Activated CD4-positive, alpha-beta T cell treated with anti-CD3 and anti-CD28 coated beads for 36 hours (primary cell): ENCODE measurements at regions of chr22 and their contacts with region 1.

Region 1: DNA sequence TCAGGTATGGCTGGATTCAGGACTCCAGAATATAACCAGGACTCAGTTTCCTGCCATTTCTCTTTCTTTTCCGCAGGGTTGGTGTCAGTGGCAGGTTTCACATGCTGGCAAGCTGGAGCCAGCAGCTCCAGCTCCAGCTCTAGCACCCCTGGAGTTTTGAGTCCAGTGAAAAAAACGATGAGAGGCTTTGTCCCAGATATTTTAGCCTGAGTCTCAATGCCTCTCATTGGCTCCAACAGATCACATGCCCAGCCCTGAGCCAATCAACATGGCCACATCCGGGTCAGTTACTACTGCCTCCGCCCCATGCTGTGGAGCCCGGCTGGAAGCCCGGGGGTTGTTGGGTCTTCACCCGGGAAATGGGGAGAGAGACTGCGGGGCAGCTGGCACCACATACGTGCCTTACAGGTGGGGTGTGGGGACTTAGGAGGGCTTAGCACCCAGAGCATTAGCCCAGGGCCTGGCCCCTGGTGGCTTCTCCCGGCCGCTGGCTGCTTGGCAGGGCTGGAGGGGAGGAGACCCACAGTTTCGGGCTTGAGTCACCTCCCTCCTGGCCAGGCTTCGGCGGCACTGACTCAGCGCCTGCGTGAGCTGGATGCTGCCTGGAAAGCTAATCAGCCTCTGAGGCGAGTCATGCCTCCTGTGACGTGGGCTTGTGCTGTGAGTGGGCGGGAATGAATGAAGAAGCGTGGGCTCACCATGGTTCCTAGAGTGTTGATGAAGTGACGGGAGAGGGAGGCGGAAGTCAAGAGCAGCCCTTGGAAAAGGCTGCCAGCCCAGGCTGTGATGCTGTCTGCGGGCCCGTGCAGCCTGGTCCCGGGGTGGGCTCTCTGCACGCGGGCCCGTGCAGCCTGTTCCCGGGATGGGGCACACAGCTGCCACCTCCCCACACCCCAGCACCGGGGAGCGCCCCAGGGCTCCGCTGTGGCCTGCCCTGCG is 15.3 kb upstream of the MRTFA start:
- DNase-seq: peak; percentile 97
- ATAC-seq: peak; percentile 99
- H3K4me3 Mint-ChIP-seq: peak overlapping the region; percentile 64
- H3K27ac Mint-ChIP-seq: peak overlapping the region; percentile 88
- H3K4me1 Mint-ChIP-seq: peaks cover 21% of the 10 kb centered on the region
- H3K27me3 Mint-ChIP-seq: no peaks in the 10 kb centered on the region

Region 2: DNA sequence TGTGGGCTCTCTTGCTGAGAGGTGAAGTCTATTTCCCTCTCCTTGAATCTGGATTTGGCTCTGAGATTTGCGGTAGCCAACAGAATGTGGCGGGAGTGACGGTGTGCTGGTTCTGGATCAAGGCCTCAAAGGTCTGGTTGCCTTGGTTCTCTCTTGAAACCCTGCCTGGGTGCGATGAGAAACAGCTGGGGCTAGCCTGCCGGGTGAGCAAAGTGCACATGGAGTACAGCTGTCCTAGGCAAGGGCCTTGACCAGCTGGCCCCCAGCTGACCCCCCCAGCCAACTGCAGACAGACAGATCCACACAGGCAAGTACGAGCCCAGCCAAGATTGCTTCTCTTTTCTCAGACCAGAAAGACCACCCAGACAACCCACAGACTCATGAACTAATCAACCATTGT is 1906.9 kb before region 1 on chr22:
- CTCF ChIA-PET with region 1: no interaction called
- POLR2A ChIA-PET with region 1: no interaction called
- intact Hi-C with region 1: no loop called
- DNase-seq: no peak
- ATAC-seq: no peak
- H3K4me3 Mint-ChIP-seq: no peak overlapping the region
- H3K27ac Mint-ChIP-seq: peak overlapping the region; percentile 59
- H3K4me1 Mint-ChIP-seq: peaks cover 17% of the 10 kb centered on the region
- H3K27me3 Mint-ChIP-seq: no peaks in the 10 kb centered on the region

Region 3: DNA sequence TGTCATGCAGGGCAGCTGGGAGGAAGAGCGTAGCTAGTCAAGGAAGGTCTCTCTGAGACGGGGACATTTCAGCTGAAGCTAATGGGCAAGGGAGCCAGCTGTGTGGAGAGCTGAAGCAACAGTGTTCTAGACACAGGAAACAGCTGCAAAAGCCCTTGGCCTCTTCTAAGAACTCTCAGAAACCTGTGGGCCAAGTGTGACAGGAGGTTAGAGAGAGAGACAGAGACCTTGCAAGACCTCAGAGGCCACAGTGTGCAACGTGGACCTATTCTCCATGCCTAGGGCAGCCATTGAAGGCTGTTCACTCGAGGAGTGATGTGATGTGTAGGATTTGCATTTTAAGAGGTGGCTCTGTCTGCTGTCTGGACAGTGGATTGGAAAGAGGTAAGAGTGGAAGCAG is 522.8 kb before region 1 on chr22:
- CTCF ChIA-PET with region 1: no interaction called
- POLR2A ChIA-PET with region 1: no interaction called
- intact Hi-C with region 1: no loop called
- DNase-seq: peak; percentile 32
- ATAC-seq: peak; percentile 77
- H3K4me3 Mint-ChIP-seq: peak overlapping the region; percentile 6
- H3K27ac Mint-ChIP-seq: peak overlapping the region; percentile 84
- H3K4me1 Mint-ChIP-seq: peaks cover 18% of the 10 kb centered on the region
- H3K27me3 Mint-ChIP-seq: no peaks in the 10 kb centered on the region

Region 4: GRCh38 chr22:40525249-40525884 is 126.5 kb before region 1 on chr22:
- CTCF ChIA-PET with region 1: interaction called, 48 read pairs
- POLR2A ChIA-PET with region 1: interaction called, 4 read pairs
- intact Hi-C with region 1: no loop called
- DNase-seq: peak; percentile 87
- ATAC-seq: peak; percentile 65
- H3K4me3 Mint-ChIP-seq: no peak overlapping the region
- H3K27ac Mint-ChIP-seq: peak overlapping the region; percentile 16
- H3K4me1 Mint-ChIP-seq: peaks cover 53% of the 10 kb centered on the region
- H3K27me3 Mint-ChIP-seq: no peaks in the 10 kb centered on the region

Region 5: DNA sequence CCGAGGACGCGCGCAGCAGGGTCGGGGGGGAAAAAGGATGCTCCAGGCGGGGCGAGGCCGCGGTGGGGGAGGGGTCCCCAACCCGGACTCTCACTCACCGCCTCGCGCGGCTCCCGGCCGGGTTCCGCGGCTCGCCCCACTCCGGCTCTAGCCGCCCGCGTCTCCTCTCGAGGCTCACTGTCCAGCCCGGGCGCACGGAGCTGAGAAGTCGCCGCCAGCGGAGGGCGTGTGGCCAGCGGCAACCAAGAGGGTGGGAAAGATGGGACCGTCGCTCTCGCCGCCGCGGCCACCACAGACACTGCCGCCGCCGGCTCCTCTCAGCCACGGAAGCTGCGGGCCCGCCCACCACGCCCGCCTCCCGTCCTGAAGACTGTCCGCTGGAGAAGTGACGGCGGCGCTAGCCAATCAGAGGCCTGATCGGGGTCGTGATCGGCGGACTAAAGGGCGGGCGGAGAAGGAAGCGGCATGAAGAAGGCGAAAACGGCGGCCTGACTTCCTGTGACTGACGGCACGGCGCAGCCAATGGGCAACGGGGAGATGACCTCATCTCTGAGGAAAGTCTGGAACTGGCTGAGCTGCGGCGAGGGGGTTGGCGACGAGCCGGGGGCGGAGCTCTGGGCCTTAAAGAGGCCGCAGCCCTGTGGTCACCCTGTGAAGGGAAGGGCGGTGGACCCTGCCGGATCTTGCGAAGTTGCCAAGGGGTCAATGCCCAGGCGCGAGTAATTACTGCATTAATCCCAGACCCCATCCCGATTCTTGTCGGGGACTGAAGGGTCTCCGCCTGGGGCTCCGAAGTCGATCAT is 15.3 kb before region 1 on chr22 and contains the start of gene MRTFA:
- CTCF ChIA-PET with region 1: interaction called, 7 read pairs
- POLR2A ChIA-PET with region 1: no interaction called
- intact Hi-C with region 1: loop called in 1 of 2 experiments (anchors 1 kb)
- DNase-seq: peak; percentile 100
- ATAC-seq: peak; percentile 96
- H3K4me3 Mint-ChIP-seq: peak within 1 kb of the TSS; percentile 85
- H3K27ac Mint-ChIP-seq: peak within 1 kb of the TSS; percentile 93
- H3K4me1 Mint-ChIP-seq: peaks cover 43% of the 10 kb centered on the region
- H3K27me3 Mint-ChIP-seq: no peaks in the 10 kb centered on the region
- total RNA-seq, gene MRTFA: 41.0 to 43.2 TPM

Region 6: GRCh38 chr22:40679964-40680818 is 28.4 kb after region 1 on chr22:
- CTCF ChIA-PET with region 1: interaction called, 5 read pairs
- POLR2A ChIA-PET with region 1: no interaction called
- intact Hi-C with region 1: loop called (anchors 1 to 2 kb)
- DNase-seq: no peak
- ATAC-seq: no peak
- H3K4me3 Mint-ChIP-seq: no peak overlapping the region
- H3K27ac Mint-ChIP-seq: no peak overlapping the region
- H3K4me1 Mint-ChIP-seq: peaks cover 22% of the 10 kb centered on the region
- H3K27me3 Mint-ChIP-seq: peaks cover 10% of the 10 kb centered on the region

Region 7: DNA sequence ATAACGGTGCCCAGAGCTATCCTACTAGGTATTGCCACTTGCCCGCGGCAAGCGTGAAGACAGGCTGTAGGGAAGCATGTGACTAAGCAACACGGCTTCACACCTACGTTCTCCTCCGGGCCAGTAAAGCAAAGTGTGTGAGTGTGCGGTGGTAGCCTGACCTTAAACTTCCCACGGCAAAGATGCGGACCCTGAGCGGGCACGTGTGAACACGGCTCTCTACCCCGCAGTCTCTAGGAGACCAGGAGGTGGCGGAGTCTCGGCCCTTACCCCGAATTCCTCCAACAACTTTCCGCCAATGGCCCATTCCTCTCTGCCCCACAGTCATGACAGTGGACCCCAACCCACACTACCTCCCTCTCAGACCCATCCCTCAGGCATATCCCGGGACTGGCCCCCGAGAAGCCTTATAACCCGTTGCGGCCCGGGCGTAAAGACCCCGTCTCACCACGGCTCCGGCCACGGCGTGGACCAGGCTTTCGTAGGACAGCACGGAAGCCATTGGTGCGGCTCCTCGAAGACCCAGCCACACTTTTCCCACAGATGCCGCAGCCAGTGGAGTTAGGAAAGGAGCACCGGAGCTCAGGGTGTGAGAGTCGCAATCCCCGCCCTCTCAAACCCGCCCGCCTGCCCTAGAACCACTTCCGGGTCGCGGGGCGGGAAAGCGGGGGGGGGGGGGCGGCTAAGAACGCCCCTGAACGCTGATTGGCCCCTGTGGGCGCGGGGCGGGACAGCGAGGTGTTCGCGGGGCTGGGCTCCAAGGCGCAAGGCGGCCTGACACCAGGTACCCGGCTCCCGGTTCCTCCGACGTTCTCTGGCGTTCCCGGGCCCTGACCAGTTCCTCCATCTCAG is 167.1 kb after region 1 on chr22 and contains the start of gene SLC25A17:
- CTCF ChIA-PET with region 1: no interaction called
- POLR2A ChIA-PET with region 1: no interaction called
- intact Hi-C with region 1: loop called in 1 of 2 experiments (anchors 1 kb)
- DNase-seq: peak; percentile 93
- ATAC-seq: peak; percentile 93
- H3K4me3 Mint-ChIP-seq: peak within 1 kb of the TSS; percentile 88
- H3K27ac Mint-ChIP-seq: peak within 1 kb of the TSS; percentile 92
- H3K4me1 Mint-ChIP-seq: peaks cover 30% of the 10 kb centered on the region
- H3K27me3 Mint-ChIP-seq: no peaks in the 10 kb centered on the region
- total RNA-seq, gene SLC25A17: 23.3 to 29.7 TPM

Region 8: GRCh38 chr22:40939202-40939601 is 287.4 kb after region 1 on chr22:
- CTCF ChIA-PET with region 1: no interaction called
- POLR2A ChIA-PET with region 1: no interaction called
- intact Hi-C with region 1: no loop called
- DNase-seq: no peak
- ATAC-seq: peak; percentile 61
- H3K4me3 Mint-ChIP-seq: no peak overlapping the region
- H3K27ac Mint-ChIP-seq: peak overlapping the region; percentile 3
- H3K4me1 Mint-ChIP-seq: peaks cover 9% of the 10 kb centered on the region
- H3K27me3 Mint-ChIP-seq: no peaks in the 10 kb centered on the region